Endothelial cell of umbilical vein (primary cell): ENCODE measurements at regions of chr6 and their contacts with region 1.

Region 1: GRCh38 chr6:75893058-75893775 is 144.2 kb downstream of the MYO6 start:
- DNase-seq: peak; percentile 81
- H3K4me3 ChIP-seq: no peak overlapping the region
- H3K27ac ChIP-seq: no peak overlapping the region
- H3K4me1 ChIP-seq: no peaks in the 10 kb centered on the region
- H3K27me3 ChIP-seq: no peaks in the 10 kb centered on the region
- CTCF ChIP-seq: peak; percentile 44 to 51
- POLR2A ChIP-seq: no peak

Region 2: DNA sequence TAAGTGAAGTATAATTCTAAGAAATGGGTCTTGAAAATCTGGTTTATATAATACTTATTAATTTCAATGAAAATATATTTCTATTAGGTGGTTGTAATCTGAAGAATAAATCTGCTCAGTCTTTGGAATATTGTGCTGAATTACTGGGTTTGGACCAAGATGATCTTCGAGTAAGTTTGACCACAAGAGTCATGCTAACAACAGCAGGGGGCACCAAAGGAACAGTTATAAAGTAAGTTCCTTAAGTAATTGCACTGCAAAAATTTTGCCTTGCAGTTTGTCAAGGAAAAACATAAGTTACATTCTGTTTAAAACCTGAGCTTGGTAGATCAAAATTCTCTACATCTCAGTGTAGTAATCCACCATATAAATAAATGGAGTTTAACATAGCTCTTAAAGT is 38.2 kb before region 1 on chr6:
- CTCF ChIA-PET with region 1: interaction called, 17 read pairs
- POLR2A ChIA-PET with region 1: no interaction called
- dilution Hi-C with region 1: no loop called
- intact Hi-C with region 1: no loop called
- DNase-seq: peak; percentile 67
- H3K4me3 ChIP-seq: no peak overlapping the region
- H3K27ac ChIP-seq: no peak overlapping the region
- H3K4me1 ChIP-seq: peaks cover 29% of the 10 kb centered on the region
- H3K27me3 ChIP-seq: no peaks in the 10 kb centered on the region
- CTCF ChIP-seq: peak; percentile 30 to 48
- POLR2A ChIP-seq: no peak

Region 3: DNA sequence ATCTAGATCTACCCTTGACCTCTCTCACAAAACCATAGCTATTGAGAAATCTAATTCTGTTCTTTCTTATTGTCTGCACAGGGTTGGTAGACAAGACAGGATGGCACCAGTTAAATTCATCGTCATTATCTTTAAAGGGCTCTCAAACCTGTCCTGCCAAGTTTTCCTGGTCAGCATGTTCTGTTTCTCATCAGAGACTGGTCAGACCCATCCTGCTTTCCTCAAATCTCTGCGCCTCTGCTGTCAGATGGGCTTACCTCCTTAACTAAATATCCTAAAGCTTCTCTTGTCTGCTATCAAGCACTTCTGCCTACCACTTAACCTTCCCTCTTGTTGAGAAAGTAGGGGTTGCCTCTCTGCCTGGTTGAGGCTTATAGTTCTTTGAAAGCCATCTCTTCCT is 19.0 kb before region 1 on chr6:
- CTCF ChIA-PET with region 1: interaction called, 87 read pairs
- POLR2A ChIA-PET with region 1: no interaction called
- dilution Hi-C with region 1: no loop called
- intact Hi-C with region 1: no loop called
- DNase-seq: no peak
- H3K4me3 ChIP-seq: no peak overlapping the region
- H3K27ac ChIP-seq: no peak overlapping the region
- H3K4me1 ChIP-seq: no peaks in the 10 kb centered on the region
- H3K27me3 ChIP-seq: no peaks in the 10 kb centered on the region
- CTCF ChIP-seq: no peak
- POLR2A ChIP-seq: no peak

Region 4: DNA sequence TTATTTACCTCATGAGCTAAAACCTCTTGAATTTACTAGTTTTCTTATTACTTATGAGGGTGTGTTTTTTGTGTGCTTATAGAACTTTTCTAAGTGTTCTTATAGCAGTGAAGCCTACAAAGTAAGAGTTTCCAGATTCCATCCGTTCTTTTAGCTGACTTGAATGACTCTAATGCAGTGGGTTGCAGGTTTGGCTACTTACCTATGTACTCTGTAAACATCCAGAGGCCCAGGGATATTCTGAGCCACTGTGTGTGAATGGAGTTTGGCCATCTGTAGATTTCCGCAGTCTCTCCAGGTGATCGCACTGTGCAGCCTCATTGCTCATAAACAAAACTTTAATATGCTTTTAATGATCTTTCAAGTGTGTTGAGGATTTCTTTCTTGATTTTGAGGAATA is 13.7 kb after region 1 on chr6:
- CTCF ChIA-PET with region 1: interaction called, 15 read pairs
- POLR2A ChIA-PET with region 1: no interaction called
- dilution Hi-C with region 1: no loop called
- intact Hi-C with region 1: no loop called
- DNase-seq: no peak
- H3K4me3 ChIP-seq: no peak overlapping the region
- H3K27ac ChIP-seq: no peak overlapping the region
- H3K4me1 ChIP-seq: no peaks in the 10 kb centered on the region
- H3K27me3 ChIP-seq: no peaks in the 10 kb centered on the region
- CTCF ChIP-seq: no peak
- POLR2A ChIP-seq: no peak

Region 5: DNA sequence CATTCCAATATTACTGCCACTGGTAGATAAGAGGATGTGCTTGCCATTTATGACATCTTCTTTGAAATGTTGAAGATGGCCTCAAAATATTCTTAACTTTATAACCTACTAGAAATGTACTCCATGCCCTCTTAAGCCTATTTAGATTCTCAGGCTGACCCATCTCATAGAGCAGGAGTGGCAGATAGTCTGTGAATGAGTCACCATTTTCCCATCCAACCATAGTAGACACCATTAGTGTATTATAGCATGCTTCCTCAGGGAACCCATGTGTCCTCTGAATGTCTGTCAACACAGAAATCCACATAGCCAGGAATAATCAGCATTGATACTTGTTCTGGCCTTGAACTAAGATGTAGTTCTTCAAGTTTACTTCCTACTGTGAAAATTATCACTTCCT is 29.0 kb after region 1 on chr6:
- CTCF ChIA-PET with region 1: interaction called, 21 read pairs
- POLR2A ChIA-PET with region 1: no interaction called
- dilution Hi-C with region 1: no loop called
- intact Hi-C with region 1: no loop called
- DNase-seq: no peak
- H3K4me3 ChIP-seq: no peak overlapping the region
- H3K27ac ChIP-seq: no peak overlapping the region
- H3K4me1 ChIP-seq: no peaks in the 10 kb centered on the region
- H3K27me3 ChIP-seq: no peaks in the 10 kb centered on the region
- CTCF ChIP-seq: no peak
- POLR2A ChIP-seq: no peak

Region 6: GRCh38 chr6:76682842-76683241 is 789.6 kb after region 1 on chr6:
- CTCF ChIA-PET with region 1: interaction called, 13 read pairs
- POLR2A ChIA-PET with region 1: no interaction called
- dilution Hi-C with region 1: no loop called
- intact Hi-C with region 1: no loop called
- DNase-seq: peak; percentile 40
- H3K4me3 ChIP-seq: no peak overlapping the region
- H3K27ac ChIP-seq: no peak overlapping the region
- H3K4me1 ChIP-seq: peaks cover 8% of the 10 kb centered on the region
- H3K27me3 ChIP-seq: no peaks in the 10 kb centered on the region
- CTCF ChIP-seq: peak in 1 of 2 donors; percentile 22
- POLR2A ChIP-seq: no peak